ENCODE measurements at regions of chr11 and their contacts with region 1.

Region 1: GRCh38 chr11:19553683-19554333 is 158.8 kb upstream of the NAV2 start:
- DNase-seq: peak; percentile 68 to 81
- H3K4me3 ChIP-seq: no peak overlapping the region
- H3K27ac ChIP-seq: no peak overlapping the region
- H3K4me1 ChIP-seq: no peaks in the 10 kb centered on the region
- H3K27me3 ChIP-seq: no peaks in the 10 kb centered on the region
- CTCF ChIP-seq: peak; percentile 99

Region 2: DNA sequence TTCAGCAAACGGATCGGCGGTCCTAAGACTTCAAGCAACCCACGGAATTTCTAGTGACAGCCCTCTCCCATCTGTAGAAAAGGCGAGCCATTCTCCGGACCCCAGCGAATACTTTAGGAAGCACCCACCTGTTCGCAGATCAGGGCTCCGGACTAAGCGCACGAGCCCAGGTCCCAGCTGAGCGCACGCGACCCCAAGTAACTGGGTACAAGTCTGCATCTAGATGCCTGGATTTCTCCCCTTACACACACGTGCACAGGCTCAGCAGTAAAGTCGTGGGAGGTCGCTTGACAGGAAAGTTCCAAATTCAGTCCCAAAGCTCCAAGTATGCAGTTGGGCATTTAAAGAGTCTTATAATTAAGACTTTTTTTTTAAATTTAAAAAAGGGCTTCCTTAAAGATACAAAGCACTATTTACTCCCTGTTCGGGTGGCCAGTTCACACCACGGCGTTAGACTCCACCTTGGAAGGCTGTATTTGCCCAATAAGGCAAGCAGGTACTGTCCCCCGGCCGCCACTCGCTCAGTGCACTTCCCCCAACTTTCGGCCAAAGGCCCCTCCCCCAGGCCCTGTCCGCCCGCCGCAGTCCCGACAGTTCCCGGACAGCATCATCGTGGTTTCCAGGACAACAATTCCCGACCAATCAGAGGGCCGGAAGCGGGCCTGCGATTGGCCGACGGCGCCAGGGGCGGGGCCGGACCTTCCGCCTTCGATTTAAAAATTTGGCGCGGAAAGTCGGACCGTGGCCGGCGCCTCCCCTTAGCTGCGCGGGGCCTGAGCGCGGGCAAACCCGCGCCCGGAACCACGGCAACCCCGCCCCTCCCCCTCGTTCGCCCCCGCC is 313.2 kb before region 1 on chr11 and contains the start of gene E2F8:
- CTCF ChIA-PET with region 1: no interaction called
- POLR2A ChIA-PET with region 1: no interaction called
- intact Hi-C with region 1: loop called (anchors 5 kb)
- DNase-seq: peak; percentile 94 to 99
- H3K4me3 ChIP-seq: peak within 1 kb of the TSS; percentile 87
- H3K27ac ChIP-seq: peak within 1 kb of the TSS; percentile 70
- H3K4me1 ChIP-seq: peaks cover 57% of the 10 kb centered on the region
- H3K27me3 ChIP-seq: no peaks in the 10 kb centered on the region
- CTCF ChIP-seq: no peak
- total RNA-seq, gene E2F8: 22.0 and 26.7 TPM in 2 replicates

Region 3: GRCh38 chr11:19311308-19312030 is 242.3 kb before region 1 on chr11:
- CTCF ChIA-PET with region 1: interaction called, 4 read pairs
- POLR2A ChIA-PET with region 1: no interaction called
- intact Hi-C with region 1: loop called (anchors 1 kb)
- DNase-seq: peak in 1 of 2 experiments; percentile 63
- H3K4me3 ChIP-seq: no peak overlapping the region
- H3K27ac ChIP-seq: no peak overlapping the region
- H3K4me1 ChIP-seq: no peaks in the 10 kb centered on the region; the same call in 1 of the 2 replicates
- H3K27me3 ChIP-seq: no peaks in the 10 kb centered on the region
- CTCF ChIP-seq: peak; percentile 94

Region 4: GRCh38 chr11:19370100-19370861 is 183.5 kb before region 1 on chr11:
- CTCF ChIA-PET with region 1: no interaction called
- POLR2A ChIA-PET with region 1: no interaction called
- intact Hi-C with region 1: loop called (anchors 5 kb)
- DNase-seq: peak; percentile 56 to 100
- H3K4me3 ChIP-seq: no peak overlapping the region
- H3K27ac ChIP-seq: peak overlapping the region; percentile 81
- H3K4me1 ChIP-seq: peaks cover 82% of the 10 kb centered on the region
- H3K27me3 ChIP-seq: no peaks in the 10 kb centered on the region
- CTCF ChIP-seq: no peak

Region 5: DNA sequence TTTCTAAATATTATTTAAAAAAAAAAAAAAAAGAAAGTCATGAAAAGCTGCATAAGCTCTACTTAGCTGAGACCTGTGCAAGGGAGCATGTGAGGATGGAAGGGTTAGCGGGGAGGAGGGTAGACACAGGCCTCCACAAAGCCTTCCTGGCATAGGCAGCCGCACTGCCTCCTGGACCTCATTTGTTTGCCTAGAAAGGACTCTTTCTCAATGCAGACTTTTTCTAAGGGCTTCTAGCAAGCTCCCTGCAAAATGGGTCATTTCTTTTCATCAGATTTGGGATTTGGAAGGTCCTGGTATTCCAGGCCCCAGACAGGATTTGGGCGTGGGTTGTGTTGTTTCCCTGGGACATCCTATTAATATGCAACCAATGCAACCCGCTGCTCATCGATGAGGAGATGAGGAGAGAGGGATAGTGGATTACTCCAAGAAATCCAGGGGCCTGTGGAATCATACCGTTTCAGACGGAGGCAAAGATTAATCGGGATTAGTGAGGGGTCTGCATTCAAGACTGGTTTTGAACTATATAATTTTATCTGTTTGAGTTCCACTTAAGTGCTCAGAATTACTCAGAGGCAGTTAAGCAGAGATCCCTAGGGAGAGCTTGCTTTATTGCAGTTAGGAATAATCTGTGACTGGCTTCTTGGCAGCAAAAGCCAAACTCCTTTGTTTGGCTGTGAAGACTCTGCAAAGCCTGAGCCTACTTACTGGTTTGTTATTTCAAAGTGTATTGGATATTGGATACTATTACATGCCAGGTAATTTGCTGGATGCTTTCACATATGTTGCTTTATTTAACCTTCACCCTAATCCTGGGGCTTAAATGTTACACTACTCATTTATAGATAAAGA is 51.9 kb after region 1 on chr11:
- CTCF ChIA-PET with region 1: no interaction called
- POLR2A ChIA-PET with region 1: no interaction called
- intact Hi-C with region 1: no loop called
- DNase-seq: no peak
- H3K4me3 ChIP-seq: no peak overlapping the region
- H3K27ac ChIP-seq: no peak overlapping the region
- H3K4me1 ChIP-seq: no peaks in the 10 kb centered on the region
- H3K27me3 ChIP-seq: 0 out of 2 replicates have a peak, but pooled peaks cover 3% of the 10 kb centered on the region
- CTCF ChIP-seq: no peak

Region 6: GRCh38 chr11:19903620-19904069 is 349.8 kb after region 1 on chr11:
- CTCF ChIA-PET with region 1: interaction called, 3 read pairs
- POLR2A ChIA-PET with region 1: no interaction called
- intact Hi-C with region 1: loop called (anchors 1 kb)
- DNase-seq: peak in 1 of 2 experiments; percentile 72
- H3K4me3 ChIP-seq: no peak overlapping the region
- H3K27ac ChIP-seq: no peak overlapping the region
- H3K4me1 ChIP-seq: no peaks in the 10 kb centered on the region
- H3K27me3 ChIP-seq: no peaks in the 10 kb centered on the region
- CTCF ChIP-seq: peak; percentile 91

Region 7: GRCh38 chr11:20127671-20128527 is 574.1 kb after region 1 on chr11:
- CTCF ChIA-PET with region 1: no interaction called
- POLR2A ChIA-PET with region 1: no interaction called
- intact Hi-C with region 1: loop called (anchors 2 kb)
- DNase-seq: peak; percentile 51 to 72
- H3K4me3 ChIP-seq: no peak overlapping the region
- H3K27ac ChIP-seq: no peak overlapping the region
- H3K4me1 ChIP-seq: no peaks in the 10 kb centered on the region
- H3K27me3 ChIP-seq: no peaks in the 10 kb centered on the region
- CTCF ChIP-seq: peak; percentile 93